Heart left ventricle (tissue), 16 donors: ENCODE measurements at regions of chr3 and their contacts with region 1.

Region 1: DNA sequence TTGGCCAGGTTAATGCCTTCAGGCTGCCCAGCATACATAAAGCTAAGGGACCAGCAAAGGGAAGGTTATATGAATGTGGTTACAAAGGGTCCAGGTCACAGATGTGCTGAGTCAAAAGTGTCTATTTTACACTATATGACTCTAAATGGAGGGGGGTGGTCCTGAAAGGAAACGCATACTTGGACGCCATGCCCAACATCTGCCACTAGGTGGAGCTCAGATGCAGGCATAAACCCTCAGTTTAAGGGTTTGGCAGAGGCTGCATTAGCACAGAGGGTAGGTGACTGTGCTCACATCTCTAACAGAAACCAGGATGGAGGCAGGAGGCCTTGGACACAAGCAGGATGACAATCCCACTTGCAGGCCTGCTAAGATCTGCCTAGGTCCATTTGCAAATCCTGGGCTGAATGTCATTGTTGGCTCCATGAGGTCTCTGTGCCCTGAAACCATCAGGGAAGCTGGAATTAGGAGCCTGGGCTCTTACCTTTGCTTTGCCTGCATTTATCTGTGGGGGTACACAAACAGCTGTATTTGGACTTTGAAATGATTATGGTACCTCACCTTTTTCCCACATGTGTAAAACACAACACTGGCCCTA is 55.8 kb downstream of the ZNF621 start:
- DNase-seq: peak; percentile 55 to 66 (median 61)
- ATAC-seq: peak in 3 of 4 donors; percentile 56 to 70 (median 68)
- H3K4me3 ChIP-seq: no peak overlapping the region
- H3K27ac ChIP-seq: no peak overlapping the region
- H3K4me1 ChIP-seq: peaks cover 0 to 22% (median 10%) of the 10 kb centered on the region in 12 donors
- H3K27me3 ChIP-seq: no peaks in the 10 kb centered on the region
- CTCF ChIP-seq: peak; percentile 89 to 98 (median 94)
- POLR2A ChIP-seq: no peak

Region 2: DNA sequence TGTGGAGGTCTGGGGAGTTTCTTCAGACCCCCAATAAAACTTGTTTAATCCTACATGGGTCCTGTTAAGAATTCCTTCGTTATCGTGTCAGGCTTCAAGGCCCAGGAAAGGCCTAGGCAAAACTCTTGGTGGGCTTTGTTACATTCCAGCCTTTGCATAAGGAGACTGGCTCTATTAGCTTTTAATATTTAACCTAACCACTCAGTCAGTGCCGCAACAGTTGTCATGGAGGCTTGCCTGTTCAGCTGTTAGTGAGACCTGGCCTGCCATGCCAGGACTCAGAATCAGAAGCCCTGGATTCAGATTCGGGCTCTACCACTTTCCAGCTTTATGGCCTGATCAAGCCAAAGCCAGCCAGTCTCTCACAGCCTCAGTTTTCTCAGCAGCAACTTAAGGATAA is 251.5 kb before region 1 on chr3:
- intact Hi-C with region 1: loop called in 6 of 10 experiments (anchors 5 to 10 kb)
- DNase-seq: no peak
- ATAC-seq: no peak
- H3K4me3 ChIP-seq: no peak overlapping the region
- H3K27ac ChIP-seq: no peak overlapping the region
- H3K4me1 ChIP-seq: peaks cover 0 to 10% (median 4%) of the 10 kb centered on the region in 12 donors
- H3K27me3 ChIP-seq: no peaks in the 10 kb centered on the region
- CTCF ChIP-seq: no peak
- POLR2A ChIP-seq: no peak

Region 3: DNA sequence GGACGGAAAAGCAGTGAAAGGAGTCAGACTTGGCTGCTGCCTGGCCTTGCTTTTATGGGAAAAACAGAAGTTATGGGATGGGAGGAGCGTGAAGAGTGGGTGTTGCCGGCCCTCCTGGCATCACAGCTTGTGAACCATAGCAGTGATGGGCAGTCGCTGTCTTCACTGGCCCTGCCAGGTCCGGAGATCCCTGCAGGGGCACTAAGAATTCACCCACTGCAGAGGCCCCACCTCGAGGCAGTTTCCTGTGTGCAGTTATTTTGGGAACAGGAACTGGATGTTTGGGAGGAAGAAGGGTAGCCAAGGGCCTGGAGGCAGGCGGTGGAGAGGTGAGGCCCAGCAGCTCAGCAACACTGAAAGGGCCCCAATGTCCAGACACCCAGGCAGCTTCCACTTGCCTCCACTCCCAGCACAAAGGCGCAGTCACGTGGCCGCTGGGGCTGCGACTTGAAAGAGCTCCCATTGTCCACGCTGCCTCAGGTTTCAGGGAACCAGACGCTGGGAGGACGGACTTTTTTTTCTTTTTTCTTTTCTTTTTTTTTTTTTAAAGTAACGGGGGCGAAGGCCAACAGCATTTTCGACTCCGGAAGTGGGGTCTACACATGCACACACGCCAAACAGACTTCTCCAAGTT is 199.8 kb after region 1 on chr3:
- intact Hi-C with region 1: loop called in 1 of 10 experiments (anchors 5 kb)
- DNase-seq: peak; percentile 81 to 90 (median 86)
- ATAC-seq: peak; percentile 82 to 90 (median 84)
- H3K4me3 ChIP-seq: peak overlapping the region in 9 of 12 donors; percentile 2 to 41 (median 29)
- H3K27ac ChIP-seq: peak overlapping the region; percentile 70 to 93 (median 80)
- H3K4me1 ChIP-seq: peaks cover 0 to 32% (median 26%) of the 10 kb centered on the region in 12 donors
- H3K27me3 ChIP-seq: no peaks in the 10 kb centered on the region
- CTCF ChIP-seq: peak in 4 of 12 donors; percentile 13 to 20 (median 16)
- POLR2A ChIP-seq: no peak

Region 4: GRCh38 chr3:40971191-40972168 is 390.9 kb after region 1 on chr3:
- intact Hi-C with region 1: loop called in 5 of 10 experiments (anchors 5 to 10 kb)
- DNase-seq: peak; percentile 64 to 85 (median 76)
- ATAC-seq: peak; percentile 80 to 96 (median 94)
- H3K4me3 ChIP-seq: no peak overlapping the region
- H3K27ac ChIP-seq: peak overlapping the region; percentile 35 to 88 (median 72)
- H3K4me1 ChIP-seq: peaks cover 8 to 63% (median 54%) of the 10 kb centered on the region in 12 donors
- H3K27me3 ChIP-seq: no peaks in the 10 kb centered on the region
- CTCF ChIP-seq: peak in 1 of 12 donors; percentile 13
- POLR2A ChIP-seq: no peak

Region 5: DNA sequence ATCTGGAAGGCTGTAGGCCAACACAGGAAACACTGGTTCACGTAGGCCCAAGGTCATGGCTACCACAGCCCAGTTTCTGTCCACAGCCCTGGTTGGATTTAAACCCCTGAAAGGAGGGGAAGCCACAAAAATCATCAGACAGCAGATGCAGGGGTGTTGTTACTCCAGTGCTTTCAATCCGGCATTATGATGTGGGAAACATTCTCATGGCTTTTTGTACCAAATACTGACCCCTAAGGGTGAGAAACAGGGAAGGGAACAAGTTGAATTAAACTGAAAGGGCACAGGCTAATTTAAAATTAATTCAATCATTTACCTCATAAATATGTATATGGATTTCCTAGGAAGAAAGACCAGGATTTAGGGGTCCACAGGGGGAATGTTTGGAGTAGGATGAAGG is 994.3 kb after region 1 on chr3:
- intact Hi-C with region 1: loop called in 4 of 10 experiments (anchors 5 to 10 kb)
- DNase-seq: no peak
- ATAC-seq: peak in 1 of 4 donors; percentile 29
- H3K4me3 ChIP-seq: no peak overlapping the region
- H3K27ac ChIP-seq: no peak overlapping the region
- H3K4me1 ChIP-seq: peaks cover 0 to 15% (median 0%) of the 10 kb centered on the region in 12 donors
- H3K27me3 ChIP-seq: no peaks in the 10 kb centered on the region
- CTCF ChIP-seq: peak in 4 of 12 donors; percentile 10 to 30 (median 22)
- POLR2A ChIP-seq: no peak

Region 6: GRCh38 chr3:41881233-41881821 is 1300.7 kb after region 1 on chr3:
- intact Hi-C with region 1: loop called (anchors 1 to 2 kb)
- DNase-seq: no peak
- ATAC-seq: no peak
- H3K4me3 ChIP-seq: no peak overlapping the region
- H3K27ac ChIP-seq: no peak overlapping the region
- H3K4me1 ChIP-seq: no peaks in the 10 kb centered on the region
- H3K27me3 ChIP-seq: no peaks in the 10 kb centered on the region
- CTCF ChIP-seq: peak; percentile 60 to 81 (median 73)
- POLR2A ChIP-seq: no peak